ENCODE measurements at regions of chr10 and their contacts with region 1.

Region 1: GRCh38 chr10:74842301-74842954 is 16.0 kb downstream of the KAT6B start:
- DNase-seq: no peak
- H3K4me3 ChIP-seq: no peak overlapping the region
- H3K27me3 ChIP-seq: no peaks in the 10 kb centered on the region
- CTCF ChIP-seq: no peak

Region 2: GRCh38 chr10:74332398-74332797 is 510.0 kb before region 1 on chr10:
- CTCF ChIA-PET with region 1: no interaction called
- POLR2A ChIA-PET with region 1: no interaction called
- DNase-seq: peak; percentile 39
- H3K4me3 ChIP-seq: no peak overlapping the region
- H3K27me3 ChIP-seq: no peaks in the 10 kb centered on the region
- CTCF ChIP-seq: no peak

Region 3: GRCh38 chr10:74831518-74832120 is 10.8 kb before region 1 on chr10:
- CTCF ChIA-PET with region 1: interaction called, 10 read pairs
- POLR2A ChIA-PET with region 1: no interaction called
- DNase-seq: no peak
- H3K4me3 ChIP-seq: no peak overlapping the region
- H3K27me3 ChIP-seq: no peaks in the 10 kb centered on the region
- CTCF ChIP-seq: no peak

Measured in BJ (cell line).